ENCODE measurements at regions of chr7 and their contacts with region 1.

Region 1: DNA sequence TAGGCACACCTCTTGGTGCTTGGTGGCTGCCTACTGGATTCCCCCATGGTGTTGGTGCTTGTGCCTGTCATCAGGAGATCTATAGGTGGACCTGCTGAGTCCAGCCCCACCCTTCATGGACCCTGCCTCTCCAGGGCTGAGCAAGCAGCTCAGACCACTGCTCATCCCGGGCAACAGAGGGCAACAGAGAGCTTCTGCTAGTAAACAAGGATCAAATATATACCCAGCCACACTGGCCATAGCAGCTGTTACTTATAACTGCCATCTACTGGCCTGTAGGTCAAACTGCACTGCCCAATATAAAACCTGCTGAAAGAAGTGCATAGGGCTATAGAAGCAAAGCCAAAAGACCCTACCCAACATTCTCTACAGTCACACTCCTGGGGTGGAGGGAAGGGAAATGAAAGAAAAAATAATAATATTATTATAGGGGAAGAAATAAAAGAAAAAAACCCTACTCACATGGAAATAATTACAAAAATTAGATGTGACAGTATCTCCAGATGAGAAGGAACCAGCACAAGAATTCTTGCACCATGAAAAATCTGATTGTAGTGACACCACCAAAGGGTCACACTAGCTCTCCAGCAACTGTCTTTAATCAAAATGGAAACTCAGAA is 54.9 kb upstream of the ZNF800 start:
- DNase-seq: peak; percentile 76
- ATAC-seq: peak; percentile 99
- H3K4me3 Mint-ChIP-seq: no peak overlapping the region
- H3K27ac Mint-ChIP-seq: peak overlapping the region; percentile 33
- H3K4me1 Mint-ChIP-seq: peaks cover 13% of the 10 kb centered on the region
- H3K27me3 Mint-ChIP-seq: peaks cover 26% of the 10 kb centered on the region

Region 2: DNA sequence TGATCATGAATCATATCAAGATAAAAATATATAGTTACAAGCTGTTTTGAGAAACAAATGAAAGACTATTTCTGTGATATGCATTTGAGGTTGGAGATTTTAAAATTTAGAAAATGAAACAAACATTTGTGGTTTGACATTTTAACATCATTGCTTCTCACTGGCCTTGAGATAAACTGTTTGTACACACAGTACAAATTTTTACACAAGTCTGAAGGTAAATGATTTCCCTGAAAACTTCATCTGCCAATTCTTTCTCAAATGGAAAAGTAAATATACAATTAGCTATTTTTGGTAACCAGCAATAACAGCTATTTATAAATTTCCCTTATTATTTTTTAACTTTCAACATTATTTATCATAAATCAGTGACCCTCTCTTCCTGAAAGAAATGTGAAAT is 93.5 kb before region 1 on chr7:
- CTCF ChIA-PET with region 1: interaction called, 51 read pairs
- POLR2A ChIA-PET with region 1: no interaction called
- DNase-seq: no peak
- ATAC-seq: no peak
- H3K4me3 Mint-ChIP-seq: no peak overlapping the region
- H3K27ac Mint-ChIP-seq: no peak overlapping the region
- H3K4me1 Mint-ChIP-seq: peaks cover 11% of the 10 kb centered on the region
- H3K27me3 Mint-ChIP-seq: no peaks in the 10 kb centered on the region

Region 3: GRCh38 chr7:127404286-127405072 is 43.0 kb before region 1 on chr7:
- CTCF ChIA-PET with region 1: interaction called, 18 read pairs
- POLR2A ChIA-PET with region 1: no interaction called
- DNase-seq: no peak
- ATAC-seq: no peak
- H3K4me3 Mint-ChIP-seq: no peak overlapping the region
- H3K27ac Mint-ChIP-seq: no peak overlapping the region
- H3K4me1 Mint-ChIP-seq: peaks cover 12% of the 10 kb centered on the region
- H3K27me3 Mint-ChIP-seq: peaks cover 6% of the 10 kb centered on the region

Region 4: GRCh38 chr7:127413962-127414361 is 33.5 kb before region 1 on chr7:
- CTCF ChIA-PET with region 1: interaction called, 15 read pairs
- POLR2A ChIA-PET with region 1: no interaction called
- DNase-seq: no peak
- ATAC-seq: peak; percentile 87
- H3K4me3 Mint-ChIP-seq: peak overlapping the region; percentile 29
- H3K27ac Mint-ChIP-seq: peak overlapping the region; percentile 86
- H3K4me1 Mint-ChIP-seq: peaks cover 57% of the 10 kb centered on the region
- H3K27me3 Mint-ChIP-seq: no peaks in the 10 kb centered on the region

Region 5: GRCh38 chr7:127557803-127558202 is 110.4 kb after region 1 on chr7:
- CTCF ChIA-PET with region 1: no interaction called
- POLR2A ChIA-PET with region 1: no interaction called
- DNase-seq: no peak
- ATAC-seq: no peak
- H3K4me3 Mint-ChIP-seq: no peak overlapping the region
- H3K27ac Mint-ChIP-seq: no peak overlapping the region
- H3K4me1 Mint-ChIP-seq: no peaks in the 10 kb centered on the region
- H3K27me3 Mint-ChIP-seq: peaks cover 2% of the 10 kb centered on the region

Region 6: DNA sequence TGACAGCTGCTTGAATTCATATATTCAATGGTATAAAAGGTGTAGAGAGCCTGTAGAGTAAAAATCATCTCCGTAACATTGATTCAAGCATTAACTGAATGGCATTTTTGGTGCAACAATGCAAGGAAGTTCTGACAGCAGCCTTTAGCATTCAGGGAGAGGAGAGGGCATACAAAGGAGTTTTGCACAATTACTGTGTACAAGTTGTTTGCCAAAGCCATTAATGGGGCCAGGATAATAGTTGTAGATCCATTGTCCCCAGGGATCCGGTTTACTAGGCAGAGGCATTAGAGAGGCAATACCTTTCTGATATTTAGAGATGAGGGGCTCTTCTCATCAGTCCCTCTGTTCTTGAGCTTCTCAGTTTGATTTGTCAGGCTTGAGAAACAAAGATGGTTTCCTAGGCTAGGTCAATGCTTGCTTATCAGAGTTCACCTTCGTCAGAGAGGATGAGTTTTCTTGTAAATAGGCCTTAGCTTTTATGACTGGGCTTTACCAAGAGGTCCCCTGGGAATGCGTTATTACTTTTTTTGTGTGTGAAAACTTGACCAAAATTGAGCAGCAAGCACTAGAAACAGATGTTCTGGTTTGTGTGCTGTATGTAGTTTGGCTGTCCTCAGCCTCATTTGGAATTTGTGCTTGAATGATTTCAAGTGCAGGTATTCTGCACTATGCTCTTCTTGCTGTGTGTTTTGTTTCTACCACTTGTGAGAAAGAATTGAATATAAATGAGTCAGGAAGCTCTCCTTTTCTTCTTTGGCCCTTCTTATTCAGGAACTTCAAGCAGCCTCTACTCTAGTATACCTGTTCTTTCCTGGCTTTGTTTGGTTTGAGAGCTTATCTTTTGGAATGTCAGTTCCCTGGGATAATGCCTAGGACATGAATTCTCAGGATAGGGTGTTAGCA is 236.6 kb after region 1 on chr7:
- CTCF ChIA-PET with region 1: no interaction called
- POLR2A ChIA-PET with region 1: no interaction called
- DNase-seq: no peak
- ATAC-seq: no peak
- H3K4me3 Mint-ChIP-seq: no peak overlapping the region
- H3K27ac Mint-ChIP-seq: no peak overlapping the region
- H3K4me1 Mint-ChIP-seq: peaks cover 14% of the 10 kb centered on the region
- H3K27me3 Mint-ChIP-seq: no peaks in the 10 kb centered on the region

Measured in activated CD8-positive, alpha-beta T cell treated with anti-CD3 and anti-CD28 coated beads, Interleukin-2, amount 10 ng/mL, durations not matched to agents 7 days and 5 days (primary cell).